Right ventricle myocardium inferior (tissue), 1 donor: ENCODE measurements at regions of chr3 and their contacts with region 1.

Region 1: DNA sequence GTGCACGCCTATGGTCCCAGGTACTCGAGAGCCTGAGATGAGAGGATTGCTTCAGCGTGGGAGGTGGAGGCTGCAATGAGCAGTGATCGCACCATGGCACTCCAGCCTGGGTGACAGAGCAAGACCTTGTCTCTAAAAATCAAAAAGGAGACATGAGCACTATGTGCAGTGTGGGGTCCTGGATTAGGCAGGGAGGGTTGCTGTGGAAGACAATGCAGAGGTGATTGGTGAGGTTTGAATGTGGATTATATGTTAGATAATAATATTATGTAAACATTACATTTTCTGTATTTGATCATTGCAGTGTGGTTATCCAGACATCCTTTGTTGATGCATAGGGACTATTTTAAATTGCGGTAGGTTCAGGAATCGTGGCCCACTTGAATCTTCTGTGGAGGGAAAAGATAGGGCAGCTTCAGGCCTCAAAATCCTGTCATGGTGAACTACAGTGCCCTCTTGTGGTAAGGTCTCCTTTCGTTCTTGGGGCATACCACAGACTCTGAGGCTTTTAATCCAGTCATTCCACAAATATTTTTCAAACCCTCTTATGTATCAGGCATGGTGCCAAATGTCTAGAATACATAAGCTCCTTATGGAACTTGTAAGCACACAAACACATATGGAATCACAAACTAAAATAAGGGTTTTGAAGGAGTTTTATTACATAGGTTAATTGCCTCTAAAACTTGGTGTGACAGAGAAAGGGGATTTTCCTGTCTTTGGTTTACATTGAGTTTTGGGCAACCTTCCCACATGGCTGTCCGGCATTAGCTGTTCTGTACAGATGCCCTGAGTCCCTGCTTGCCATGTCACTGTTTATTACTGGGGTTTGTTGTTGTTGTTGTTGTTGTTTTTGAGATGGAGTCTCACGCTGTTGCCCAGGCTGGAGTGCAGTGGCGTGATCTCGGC is 37.7 kb downstream of the GPD1L start:
- DNase-seq: no peak
- ATAC-seq: peak; percentile 81

Region 2: DNA sequence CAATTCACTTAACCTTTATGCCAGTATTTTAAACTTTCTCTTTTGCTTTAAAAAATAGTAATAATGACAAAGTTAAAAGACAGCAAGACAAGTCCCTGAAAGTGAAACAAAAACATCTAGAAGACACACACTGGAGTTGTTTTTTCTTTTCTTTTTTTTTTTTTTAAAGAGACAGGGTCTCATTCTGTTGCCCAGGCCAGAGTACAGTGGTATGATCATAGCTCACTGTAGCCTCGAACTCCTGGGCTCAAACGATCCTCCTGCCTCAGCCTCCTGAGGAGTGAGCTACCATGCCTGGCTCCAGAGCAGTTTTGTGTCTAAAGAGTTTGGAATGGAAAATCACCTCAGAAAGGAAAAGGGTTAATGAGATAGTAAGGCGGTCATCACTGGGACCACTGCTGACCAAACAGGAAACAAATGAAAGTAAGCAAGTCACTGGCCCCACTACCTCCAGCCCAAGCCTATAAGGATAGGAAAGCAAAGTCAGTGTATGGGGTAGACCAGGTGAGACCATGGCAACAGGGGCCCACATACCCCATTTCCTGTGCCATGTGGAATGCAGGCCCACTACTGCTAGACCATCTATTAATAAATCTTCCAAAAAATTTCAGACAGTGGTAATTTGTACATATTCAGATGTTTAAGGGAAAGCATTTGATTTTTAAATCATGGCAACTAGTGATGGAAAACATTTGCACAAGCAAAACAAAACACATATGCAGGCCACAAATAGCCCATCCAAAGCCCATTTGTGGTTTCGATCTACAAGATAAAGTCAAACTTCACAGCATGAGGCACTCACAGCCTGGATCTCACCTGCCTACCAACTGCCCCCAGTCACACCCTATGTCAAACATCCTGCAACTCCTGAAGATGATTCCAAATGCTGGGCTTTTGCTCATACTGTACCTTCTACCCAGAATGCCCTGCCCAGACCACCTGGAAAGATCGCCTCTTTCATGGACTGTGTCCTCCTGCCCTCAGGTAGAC is 225.6 kb before region 1 on chr3:
- intact Hi-C with region 1: no loop called
- DNase-seq: no peak
- ATAC-seq: no peak

Region 3: DNA sequence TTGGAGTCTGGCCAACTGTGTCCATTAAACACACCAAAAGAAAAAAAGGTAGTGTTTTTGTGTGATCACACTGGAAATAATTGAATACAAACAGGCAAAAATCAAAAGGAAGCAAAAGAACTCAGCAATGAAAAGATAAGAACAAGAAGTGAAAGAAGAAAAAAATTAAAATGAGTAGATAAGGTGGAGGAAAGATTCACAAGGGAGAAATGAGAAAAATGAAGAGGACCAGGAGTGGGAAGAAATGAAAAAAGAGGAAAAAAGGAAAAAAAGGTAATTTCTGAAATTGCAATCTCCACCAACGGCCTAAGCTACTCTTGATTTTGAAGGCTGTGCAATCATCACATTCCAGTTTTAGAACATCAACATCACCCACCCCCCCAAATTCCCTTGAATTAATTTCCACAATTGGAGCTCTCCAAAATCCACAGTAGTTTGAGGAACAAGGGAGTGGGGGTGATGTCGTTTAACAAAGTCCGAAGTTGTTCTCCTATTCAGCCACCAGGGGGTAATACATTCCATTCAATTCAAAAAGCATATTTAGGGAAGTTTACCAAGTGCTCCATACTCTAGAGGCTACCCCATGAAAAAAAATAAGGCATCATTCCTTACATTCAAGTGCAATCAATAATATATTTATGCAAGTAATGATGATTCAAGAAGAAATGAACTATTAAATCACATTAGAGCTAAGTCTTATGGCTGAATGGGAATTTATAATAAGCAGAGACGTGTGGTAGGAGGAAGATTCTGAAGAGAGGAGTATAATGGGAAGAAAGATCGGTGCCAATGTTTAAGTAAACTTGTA is 125.1 kb before region 1 on chr3:
- intact Hi-C with region 1: loop called (anchors 1 kb)
- DNase-seq: no peak
- ATAC-seq: peak; percentile 78

Region 4: GRCh38 chr3:32106280-32106928 is 37.7 kb before region 1 on chr3 and contains the start of gene GPD1L:
- intact Hi-C with region 1: loop called (anchors 5 kb)
- DNase-seq: peak; percentile 98
- ATAC-seq: peak; percentile 96
- total RNA-seq, gene GPD1L: 223 TPM